ENCODE measurements at regions of chr4 and their contacts with region 1.

Region 1: DNA sequence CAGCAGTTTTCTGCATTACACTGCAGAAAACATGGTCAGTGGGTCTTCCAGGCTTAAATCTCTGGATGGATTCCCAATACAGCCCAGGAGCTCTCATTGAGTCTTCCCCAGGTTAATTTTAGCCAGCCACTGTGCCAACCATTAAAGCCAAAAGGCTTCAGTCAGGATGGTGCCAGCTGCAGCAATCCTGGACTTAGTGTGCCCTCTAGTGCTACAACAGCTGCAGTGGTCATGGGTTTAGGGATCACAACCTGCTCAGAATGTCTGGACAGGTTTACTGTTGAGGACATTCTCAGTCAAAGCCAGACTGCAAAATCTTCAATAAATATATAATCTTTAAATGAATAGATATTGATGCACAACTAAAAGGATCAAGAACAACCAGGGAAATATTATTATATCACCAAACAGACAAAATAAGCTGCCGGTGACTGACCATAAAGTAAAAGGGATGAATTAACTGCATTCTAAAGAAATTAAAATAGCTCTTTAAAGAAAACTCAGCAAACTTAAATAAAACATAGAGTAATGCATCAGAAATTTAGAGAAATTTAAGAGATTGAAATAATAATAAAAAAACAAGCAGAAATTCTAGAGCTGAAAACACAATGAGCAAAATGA is 639.9 kb downstream of the SPOCK3 start:
- DNase-seq: peak; percentile 35
- H3K4me3 ChIP-seq: no peak overlapping the region
- H3K27ac ChIP-seq: no peak overlapping the region
- H3K4me1 ChIP-seq: no peaks in the 10 kb centered on the region
- H3K27me3 ChIP-seq: no peaks in the 10 kb centered on the region
- CTCF ChIP-seq: peak; percentile 58

Region 2: DNA sequence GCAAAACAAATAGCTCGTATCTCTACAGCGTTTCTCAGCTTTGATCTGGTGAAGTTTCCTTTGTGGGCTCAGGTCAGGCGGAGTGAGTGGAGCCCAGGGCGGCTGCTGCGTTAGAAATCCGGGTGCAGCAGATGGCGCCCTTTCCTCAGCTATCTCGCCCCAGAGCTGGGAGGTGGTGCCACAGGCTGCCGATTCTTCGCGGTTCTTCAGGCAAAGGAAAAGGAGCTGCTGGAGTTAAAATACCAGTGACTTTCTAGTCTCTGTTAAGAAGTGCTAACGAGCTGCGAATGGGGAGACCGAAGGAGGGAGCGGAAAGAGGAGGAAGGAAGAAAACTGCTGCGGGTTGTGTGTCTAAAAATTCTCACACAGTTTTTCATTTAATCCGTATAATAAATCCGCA is 1101.1 kb before region 1 on chr4:
- CTCF ChIA-PET with region 1: no interaction called
- POLR2A ChIA-PET with region 1: no interaction called
- intact Hi-C with region 1: loop called (anchors 5 kb)
- DNase-seq: peak; percentile 88
- H3K4me3 ChIP-seq: no peak overlapping the region
- H3K27ac ChIP-seq: no peak overlapping the region
- H3K4me1 ChIP-seq: peaks cover 8% of the 10 kb centered on the region
- H3K27me3 ChIP-seq: no peaks in the 10 kb centered on the region
- CTCF ChIP-seq: peak; percentile 92

Region 3: GRCh38 chr4:166165829-166166420 is 428.5 kb before region 1 on chr4:
- CTCF ChIA-PET with region 1: no interaction called
- POLR2A ChIA-PET with region 1: no interaction called
- intact Hi-C with region 1: loop called (anchors 2 kb)
- DNase-seq: peak; percentile 87
- H3K4me3 ChIP-seq: no peak overlapping the region
- H3K27ac ChIP-seq: no peak overlapping the region
- H3K4me1 ChIP-seq: no peaks in the 10 kb centered on the region
- H3K27me3 ChIP-seq: no peaks in the 10 kb centered on the region
- CTCF ChIP-seq: peak; percentile 74

Region 4: GRCh38 chr4:166324321-166324720 is 270.1 kb before region 1 on chr4:
- CTCF ChIA-PET with region 1: no interaction called
- POLR2A ChIA-PET with region 1: no interaction called
- intact Hi-C with region 1: loop called (anchors 5 kb)
- DNase-seq: peak; percentile 51
- H3K4me3 ChIP-seq: no peak overlapping the region
- H3K27ac ChIP-seq: no peak overlapping the region
- H3K4me1 ChIP-seq: no peaks in the 10 kb centered on the region
- H3K27me3 ChIP-seq: no peaks in the 10 kb centered on the region
- CTCF ChIP-seq: peak; percentile 62

Region 5: DNA sequence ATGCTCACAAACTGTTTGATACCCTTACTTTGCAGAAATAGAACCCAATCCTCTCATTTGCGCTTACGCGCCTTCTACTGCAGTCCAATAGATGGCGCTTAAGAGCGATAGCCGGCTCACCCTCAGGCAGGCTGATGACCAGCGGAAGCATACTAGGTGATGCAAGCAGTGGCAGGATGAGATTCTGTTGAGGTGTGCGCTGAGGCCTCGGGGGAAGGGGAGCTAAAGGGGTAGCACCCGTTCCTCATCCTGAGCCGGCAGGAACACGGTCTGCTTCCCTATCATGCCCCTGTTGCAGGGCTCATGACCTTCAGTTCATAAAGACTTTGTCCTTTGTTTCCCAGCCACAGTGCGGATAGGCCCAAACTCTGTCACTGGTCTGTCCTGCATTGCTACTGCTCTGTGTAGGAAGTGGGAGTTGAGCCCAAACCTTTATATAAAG is 92.5 kb before region 1 on chr4:
- CTCF ChIA-PET with region 1: no interaction called
- POLR2A ChIA-PET with region 1: no interaction called
- intact Hi-C with region 1: loop called (anchors 5 kb)
- DNase-seq: peak; percentile 52
- H3K4me3 ChIP-seq: no peak overlapping the region
- H3K27ac ChIP-seq: no peak overlapping the region
- H3K4me1 ChIP-seq: no peaks in the 10 kb centered on the region
- H3K27me3 ChIP-seq: no peaks in the 10 kb centered on the region
- CTCF ChIP-seq: peak; percentile 79